ENCODE measurements at regions of chr11 and their contacts with region 1.

Region 1: DNA sequence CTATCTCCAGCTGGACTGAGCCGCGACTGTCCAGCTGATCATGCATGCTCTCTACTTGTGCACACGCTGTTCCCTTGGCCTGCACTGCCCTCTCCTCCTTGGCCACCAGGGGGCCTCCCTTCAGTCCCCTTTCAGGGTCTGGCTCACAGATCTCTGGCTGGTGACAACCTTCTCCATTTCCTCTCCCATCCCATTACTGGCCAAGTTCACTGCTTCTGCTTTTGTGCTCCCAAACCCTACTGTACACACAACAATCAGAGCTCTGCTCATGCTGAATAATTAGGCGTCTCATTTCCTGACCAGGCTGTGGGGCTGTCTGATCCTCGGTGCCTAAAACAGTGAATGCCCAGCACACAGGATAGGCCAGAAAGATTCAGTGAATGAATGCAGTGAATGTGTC is 224.0 kb upstream of the NARS2 start:
- DNase-seq: peak; percentile 18
- H3K4me3 Mint-ChIP-seq: no peak overlapping the region
- H3K27ac Mint-ChIP-seq: no peak overlapping the region
- H3K4me1 Mint-ChIP-seq: no peaks in the 10 kb centered on the region
- H3K27me3 Mint-ChIP-seq: no peaks in the 10 kb centered on the region

Region 2: GRCh38 chr11:78708383-78708782 is 90.3 kb before region 1 on chr11:
- intact Hi-C with region 1: no loop called
- DNase-seq: no peak
- H3K4me3 Mint-ChIP-seq: no peak overlapping the region
- H3K27ac Mint-ChIP-seq: no peak overlapping the region
- H3K4me1 Mint-ChIP-seq: no peaks in the 10 kb centered on the region
- H3K27me3 Mint-ChIP-seq: peaks cover 4% of the 10 kb centered on the region

Region 3: GRCh38 chr11:78868563-78868962 is 69.9 kb after region 1 on chr11:
- intact Hi-C with region 1: no loop called
- DNase-seq: no peak
- H3K4me3 Mint-ChIP-seq: no peak overlapping the region
- H3K27ac Mint-ChIP-seq: no peak overlapping the region
- H3K4me1 Mint-ChIP-seq: no peaks in the 10 kb centered on the region
- H3K27me3 Mint-ChIP-seq: peaks cover 8% of the 10 kb centered on the region

Region 4: DNA sequence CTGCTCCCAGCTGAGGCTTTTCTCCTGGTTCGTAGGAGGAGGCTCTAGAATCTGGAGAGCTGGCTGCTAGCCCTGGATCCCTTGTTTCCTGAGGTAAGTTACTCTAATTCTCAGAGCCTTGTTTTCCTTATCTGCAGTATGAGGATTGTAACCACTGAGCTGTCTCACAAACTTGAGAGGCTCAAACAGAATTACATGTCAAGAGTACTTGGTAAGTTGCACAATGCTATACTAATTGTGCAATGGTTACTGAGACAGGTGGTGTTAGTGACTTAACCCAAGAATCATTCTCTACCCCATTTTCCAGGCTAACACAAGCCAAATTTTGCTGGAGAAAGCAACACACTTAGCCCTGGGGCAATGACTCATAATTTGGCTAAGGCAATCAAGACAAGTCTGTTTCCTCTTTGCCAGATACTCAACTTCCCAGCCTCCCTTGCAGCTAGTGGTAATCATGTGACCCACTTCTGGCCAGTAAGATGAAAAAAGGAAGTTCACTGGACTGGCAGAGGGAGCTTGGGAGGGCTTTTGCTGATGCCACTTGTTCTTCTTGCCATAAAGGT is 294.2 kb after region 1 on chr11:
- intact Hi-C with region 1: loop called (anchors 10 kb)
- DNase-seq: no peak
- H3K4me3 Mint-ChIP-seq: no peak overlapping the region
- H3K27ac Mint-ChIP-seq: no peak overlapping the region
- H3K4me1 Mint-ChIP-seq: no peaks in the 10 kb centered on the region
- H3K27me3 Mint-ChIP-seq: no peaks in the 10 kb centered on the region

Measured in activated T-helper 2 cell treated with anti-CD3 and anti-CD28 coated beads, Interferon-gamma antibody, Interleukin-2, Interleukin-4, amounts not matched to agents 10 μg/mL and 5 μg/mL and 100 μg/mL, durations not matched to agents 14 hours and 24 hours and 36 hours (primary cell).